RWPE1 (cell line): ENCODE measurements at regions of chr20 and their contacts with region 1.

Region 1: GRCh38 chr20:50153485-50154377 is at the start of gene PEDS1:
- DNase-seq: peak; percentile 99
- H3K27ac ChIP-seq: peak within 1 kb of the TSS; percentile 98
- CTCF ChIP-seq: no peak

Region 2: GRCh38 chr20:49567421-49568334 is 586.1 kb before region 1 on chr20 and contains the start of gene PTGIS:
- CTCF ChIA-PET with region 1: no interaction called
- POLR2A ChIA-PET with region 1: no interaction called
- DNase-seq: no peak
- H3K27ac ChIP-seq: no peak within 1 kb of the TSS
- CTCF ChIP-seq: no peak

Region 3: DNA sequence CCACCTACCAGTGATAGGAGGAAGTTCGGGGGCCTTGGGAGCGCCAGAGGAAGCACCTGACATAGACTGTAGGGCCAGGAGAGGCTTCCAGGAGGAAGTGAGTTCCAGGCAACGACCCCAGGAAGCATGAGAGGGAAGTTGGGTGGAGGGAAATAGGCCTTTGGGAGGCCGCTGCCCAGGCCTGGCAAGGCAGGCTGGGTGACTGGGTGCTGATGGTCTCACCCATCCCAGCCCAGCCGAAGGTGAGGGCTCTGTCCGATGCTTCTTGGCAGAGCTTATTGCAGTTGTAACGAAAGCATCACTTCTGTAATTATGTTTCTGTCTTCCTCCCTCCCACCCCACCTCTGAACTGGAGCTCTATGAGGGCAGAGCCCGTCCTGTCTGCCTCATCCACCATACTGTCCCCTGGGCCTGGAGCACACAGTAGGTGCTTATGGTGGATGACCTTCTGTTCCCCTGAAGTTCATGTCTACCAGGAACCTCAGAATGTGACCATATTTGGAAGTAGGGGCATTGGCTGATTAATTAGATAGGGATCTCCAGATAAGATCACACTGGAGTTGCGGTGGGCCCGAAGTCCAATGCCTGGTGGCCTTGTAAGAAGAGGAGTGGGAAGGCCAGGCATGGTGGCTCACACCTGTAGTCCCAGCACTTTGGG is 94.9 kb before region 1 on chr20:
- CTCF ChIA-PET with region 1: interaction called, 4 read pairs
- POLR2A ChIA-PET with region 1: interaction called, 11 read pairs
- DNase-seq: no peak
- H3K27ac ChIP-seq: no peak overlapping the region
- CTCF ChIP-seq: no peak

Region 4: DNA sequence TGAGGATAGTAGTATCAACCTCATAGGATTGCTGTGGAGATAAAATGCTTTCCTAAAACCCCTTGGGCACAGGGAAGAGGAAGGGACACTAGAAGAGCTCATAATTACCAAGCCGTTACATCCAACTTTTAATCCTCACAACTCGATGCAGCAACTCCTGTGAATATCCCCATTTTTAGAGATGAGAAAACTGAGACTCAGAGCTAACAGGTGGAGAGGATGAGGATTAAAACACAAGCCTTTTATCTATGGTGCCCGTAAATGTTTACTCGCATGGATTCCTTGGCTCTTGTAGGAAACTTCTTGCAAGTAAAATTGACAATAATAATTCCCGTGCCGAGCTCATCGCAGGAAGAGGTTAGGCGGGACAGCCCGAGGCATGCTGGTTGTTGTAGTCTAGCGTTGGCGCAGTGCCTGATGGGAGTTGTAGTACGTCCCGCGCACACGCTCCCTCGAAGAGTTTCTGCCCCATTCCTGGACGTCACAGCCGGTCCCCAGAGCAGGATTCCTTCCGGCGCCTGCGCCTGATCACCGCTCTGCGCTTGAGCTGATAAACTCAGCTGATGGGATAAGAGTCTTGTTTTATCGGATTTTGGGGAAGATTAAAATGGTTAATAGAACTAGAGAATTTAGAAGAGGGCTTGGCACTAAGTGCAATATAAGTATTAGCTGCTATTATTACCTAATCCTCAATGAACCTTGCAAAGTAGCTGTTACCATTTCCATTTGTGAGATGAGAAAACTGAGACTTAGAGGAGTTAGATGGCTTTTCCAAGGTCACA is 37.9 kb before region 1 on chr20:
- CTCF ChIA-PET with region 1: interaction called, 126 read pairs
- POLR2A ChIA-PET with region 1: interaction called, 25 read pairs
- DNase-seq: peak; percentile 98
- H3K27ac ChIP-seq: peak overlapping the region; percentile 48
- CTCF ChIP-seq: no peak

Region 5: GRCh38 chr20:50120897-50121693 is 32.6 kb before region 1 on chr20:
- CTCF ChIA-PET with region 1: interaction called, 126 read pairs
- POLR2A ChIA-PET with region 1: interaction called, 25 read pairs
- DNase-seq: peak; percentile 91
- H3K27ac ChIP-seq: peak overlapping the region; percentile 56
- CTCF ChIP-seq: peak; percentile 99

Region 6: GRCh38 chr20:50165684-50166554 is 12.2 kb after region 1 on chr20:
- CTCF ChIA-PET with region 1: interaction called, 23 read pairs
- POLR2A ChIA-PET with region 1: interaction called, 23 read pairs
- DNase-seq: peak; percentile 100
- H3K27ac ChIP-seq: peak overlapping the region; percentile 94
- CTCF ChIP-seq: no peak

Region 7: GRCh38 chr20:50172347-50173013 is 18.7 kb after region 1 on chr20:
- CTCF ChIA-PET with region 1: interaction called, 23 read pairs
- POLR2A ChIA-PET with region 1: interaction called, 23 read pairs
- DNase-seq: peak; percentile 91
- H3K27ac ChIP-seq: peak overlapping the region; percentile 83
- CTCF ChIP-seq: no peak

Region 8: DNA sequence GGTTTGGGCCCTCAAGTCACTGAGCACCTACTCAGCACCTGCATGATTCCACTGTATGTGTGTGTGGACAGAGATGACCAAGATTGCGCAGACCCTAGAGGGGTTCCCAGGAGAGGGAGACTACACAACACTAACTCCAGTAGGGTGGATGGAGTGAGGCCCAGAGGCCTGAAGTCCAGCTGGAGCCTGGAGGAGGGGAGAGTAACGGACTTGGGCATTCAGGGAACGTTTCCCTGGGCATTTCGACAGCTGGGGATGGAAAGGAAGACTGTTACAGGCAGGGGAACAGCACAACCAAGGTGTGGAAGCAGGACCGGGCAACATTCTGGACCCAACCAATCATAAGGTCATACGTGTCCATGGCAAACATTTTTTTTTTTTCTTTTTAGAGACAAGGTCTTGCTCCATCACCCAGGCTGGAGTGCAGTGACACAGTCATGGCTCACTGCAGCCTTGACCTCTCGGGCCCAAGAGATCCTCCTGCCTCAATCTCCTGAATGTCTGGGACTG is 25.8 kb after region 1 on chr20:
- CTCF ChIA-PET with region 1: interaction called, 26 read pairs
- POLR2A ChIA-PET with region 1: interaction called, 5 read pairs
- DNase-seq: no peak
- H3K27ac ChIP-seq: peak overlapping the region; percentile 29
- CTCF ChIP-seq: peak; percentile 75